Right ventricle myocardium superior (tissue), 1 donor: ENCODE measurements at regions of chr18 and their contacts with region 1.

Region 1: GRCh38 chr18:53698907-53699306 is 525.6 kb downstream of the MBD2 start:
- DNase-seq: no peak
- ATAC-seq: peak; percentile 85

Region 2: GRCh38 chr18:54043484-54044251 is 344.8 kb after region 1 on chr18:
- intact Hi-C with region 1: loop called (anchors 10 kb)
- DNase-seq: no peak
- ATAC-seq: peak; percentile 22

Region 3: GRCh38 chr18:54119524-54120019 is 420.7 kb after region 1 on chr18:
- intact Hi-C with region 1: loop called (anchors 5 kb)
- DNase-seq: no peak
- ATAC-seq: peak; percentile 87

Region 4: DNA sequence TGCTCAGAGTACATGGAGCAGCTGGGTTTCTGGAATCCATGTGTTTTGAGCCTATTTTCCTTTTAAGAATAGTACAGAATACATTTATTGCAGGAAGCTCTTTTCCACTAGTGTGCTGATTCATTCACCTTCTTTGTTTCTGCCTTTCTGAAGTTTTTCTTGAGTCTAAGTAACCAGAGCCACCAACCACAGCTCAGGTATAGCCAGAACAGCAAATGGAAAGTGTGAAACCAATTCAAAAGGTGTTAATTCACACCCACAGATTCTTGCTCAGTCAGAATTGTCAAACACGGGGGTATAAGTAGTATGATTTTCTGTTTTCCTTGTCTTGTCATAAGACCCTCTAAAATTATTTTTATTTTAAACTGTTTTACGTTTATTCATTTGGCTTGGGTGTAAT is 816.2 kb after region 1 on chr18:
- intact Hi-C with region 1: no loop called
- DNase-seq: no peak
- ATAC-seq: no peak